GM12878 (cell line): ENCODE measurements at regions of chr1 and their contacts with region 1.

Region 1: DNA sequence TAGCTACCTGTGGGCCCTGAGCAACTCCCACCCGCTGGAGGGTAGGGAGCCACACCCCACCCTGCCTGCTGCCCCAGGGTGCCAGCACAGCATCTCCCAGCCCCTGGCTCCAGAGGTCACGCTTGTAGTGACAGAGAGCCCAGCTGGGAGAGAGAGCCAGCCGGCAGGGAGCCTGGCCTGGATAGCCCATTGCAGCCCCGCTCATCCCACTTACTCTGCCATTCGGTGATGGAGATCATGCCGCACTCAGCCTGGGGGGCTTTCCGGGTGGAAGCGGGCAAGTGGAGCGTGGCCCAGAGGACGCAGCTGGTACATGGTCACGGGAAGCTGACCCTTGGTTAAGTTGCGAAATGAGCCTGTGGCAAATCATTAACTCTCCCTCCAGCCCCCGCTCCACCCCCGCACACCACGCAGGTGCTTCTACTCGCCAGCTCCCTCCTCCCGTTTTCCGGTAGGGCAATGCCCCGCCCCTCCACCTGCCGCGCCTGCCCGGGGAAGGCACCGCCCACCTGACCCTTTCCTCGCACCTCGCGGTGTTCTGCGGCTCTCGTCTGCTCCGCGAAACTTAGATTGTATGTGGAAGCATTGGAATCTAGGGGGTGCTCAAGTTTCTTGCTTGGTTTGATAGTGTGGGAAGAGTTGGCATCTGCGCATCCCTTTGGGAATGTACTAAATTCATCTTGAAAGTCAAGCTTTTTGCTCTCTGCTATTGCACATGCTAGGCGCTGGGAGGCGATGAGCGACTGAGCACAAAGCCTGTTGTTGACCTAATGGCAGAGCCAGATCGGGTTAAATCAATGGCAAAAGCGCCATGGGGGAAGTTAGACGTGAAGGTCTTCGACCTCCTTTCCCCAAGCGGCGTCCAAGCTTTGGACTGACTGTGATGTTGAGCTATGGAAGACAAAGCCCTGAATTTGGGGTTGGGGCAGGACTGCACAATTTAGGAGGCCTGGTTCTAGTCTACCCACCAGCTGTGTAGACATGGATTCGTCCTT is at the start of gene GOLT1A:
- DNase-seq: peak; percentile 28
- ATAC-seq: peak; percentile 84
- H3K4me3 ChIP-seq: no peak within 1 kb of the TSS
- H3K27ac ChIP-seq: no peak within 1 kb of the TSS
- H3K4me1 ChIP-seq: no peaks in the 10 kb centered on the region
- H3K27me3 ChIP-seq: peaks cover 0 to 2% of the 10 kb centered on the region in 2 experiments; a peak in 1 of 4 replicates
- CTCF ChIP-seq: peak; percentile 22 to 26 (median 25); a peak in 4 of 6 replicates
- EP300 ChIP-seq: 0 out of 4 replicates have a peak, but pooled peaks of 1 of the 2 experiments have one; percentile 21
- POLR2A ChIP-seq: no peak
- RAD21 ChIP-seq: peak; percentile 25; the same call in 1 of the 2 replicates
- polyA plus RNA-seq, gene GOLT1A: 0.09 TPM in 1 of 2 experiments, not detected in the other

Region 2: GRCh38 chr1:203584035-203584434 is 629.9 kb before region 1 on chr1:
- CTCF ChIA-PET with region 1: no interaction called
- POLR2A ChIA-PET with region 1: no interaction called
- RAD21 ChIA-PET with region 1: no interaction called
- SMC1A ChIA-PET with region 1: no interaction called
- in situ Hi-C with region 1: no loop called
- intact Hi-C with region 1: no loop called
- DNase-seq: no peak
- ATAC-seq: no peak
- H3K4me3 ChIP-seq: no peak overlapping the region
- H3K27ac ChIP-seq: no peak overlapping the region
- H3K4me1 ChIP-seq: no peaks in the 10 kb centered on the region
- H3K27me3 ChIP-seq: peaks cover 2 to 5% of the 10 kb centered on the region in 2 experiments; a peak in 2 of 4 replicates
- CTCF ChIP-seq: no peak
- EP300 ChIP-seq: no peak
- POLR2A ChIP-seq: no peak
- RAD21 ChIP-seq: no peak

Region 3: DNA sequence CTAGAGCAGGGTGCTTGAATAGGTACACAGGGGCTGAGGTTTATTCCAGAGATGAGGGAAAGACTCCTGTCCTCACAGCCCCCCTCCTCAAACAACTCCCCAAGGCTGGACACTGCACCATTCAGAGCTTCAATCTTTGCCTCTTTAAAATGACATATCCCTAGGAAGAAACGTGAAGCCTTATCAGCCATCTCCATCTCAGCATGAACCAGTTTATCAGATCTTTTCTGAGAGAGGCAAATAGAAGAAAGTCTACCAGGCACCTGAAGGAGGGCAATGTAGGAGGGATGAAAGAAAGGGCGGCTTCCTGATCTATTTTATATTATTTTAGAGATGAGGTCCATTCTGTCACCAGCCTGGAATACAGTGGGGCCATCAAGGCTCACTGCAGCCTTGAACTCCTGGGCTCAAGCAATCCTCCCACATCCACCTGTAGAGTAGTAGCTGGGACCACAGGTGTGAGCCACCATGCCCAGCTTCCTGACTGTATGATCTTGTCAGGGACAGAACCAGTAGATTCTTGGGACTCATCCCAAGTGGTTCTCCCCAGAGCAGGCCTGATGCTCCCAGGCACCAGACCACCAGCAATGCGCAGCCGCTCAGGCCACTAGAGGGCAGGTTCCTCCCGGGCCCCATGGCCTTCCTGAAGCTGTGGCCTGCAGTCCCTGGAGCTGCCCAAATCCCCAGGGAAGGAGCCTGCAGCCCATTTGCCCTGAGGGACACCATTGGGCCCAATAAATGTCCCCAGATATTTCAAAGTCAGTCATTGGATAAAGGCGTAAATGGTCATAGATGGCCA is 44.2 kb after region 1 on chr1:
- CTCF ChIA-PET with region 1: interaction called, 16 read pairs
- POLR2A ChIA-PET with region 1: interaction called, 4 read pairs
- RAD21 ChIA-PET with region 1: no interaction called
- SMC1A ChIA-PET with region 1: interaction called, 3 read pairs
- in situ Hi-C with region 1: no loop called
- intact Hi-C with region 1: no loop called
- DNase-seq: no peak
- ATAC-seq: peak; percentile 84
- H3K4me3 ChIP-seq: no peak overlapping the region
- H3K27ac ChIP-seq: no peak overlapping the region
- H3K4me1 ChIP-seq: no peaks in the 10 kb centered on the region
- H3K27me3 ChIP-seq: peaks cover 2 to 6% of the 10 kb centered on the region in 2 experiments; a peak in 3 of 4 replicates
- CTCF ChIP-seq: peak; percentile 55 to 69 (median 63)
- EP300 ChIP-seq: no peak
- POLR2A ChIP-seq: no peak
- RAD21 ChIP-seq: peak; percentile 45